ENCODE measurements at regions of chr12 and their contacts with region 1.

Region 1: DNA sequence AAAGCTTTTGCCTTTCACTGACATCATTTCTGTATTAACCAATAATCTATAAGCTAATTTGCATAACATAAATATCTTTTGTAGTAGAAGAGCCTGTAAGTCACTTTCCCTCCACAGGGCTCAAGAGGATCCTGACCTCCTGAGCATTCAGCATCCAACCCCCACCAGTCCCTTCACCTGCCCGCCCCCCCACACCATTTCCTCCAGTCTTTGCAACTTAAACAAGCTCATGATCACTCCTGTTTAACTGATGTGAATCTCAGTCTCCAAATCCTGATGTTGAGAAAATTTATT is 12.0 kb upstream of the CRY1 start:
- DNase-seq: no peak
- H3K27ac ChIP-seq: no peak overlapping the region
- CTCF ChIP-seq: no peak

Region 2: GRCh38 chr12:106986625-106987430 is 118.5 kb before region 1 on chr12 and contains the start of gene MTERF2:
- CTCF ChIA-PET with region 1: no interaction called
- POLR2A ChIA-PET with region 1: no interaction called
- DNase-seq: peak; percentile 98
- H3K27ac ChIP-seq: peak within 1 kb of the TSS; percentile 81
- CTCF ChIP-seq: no peak

Region 3: DNA sequence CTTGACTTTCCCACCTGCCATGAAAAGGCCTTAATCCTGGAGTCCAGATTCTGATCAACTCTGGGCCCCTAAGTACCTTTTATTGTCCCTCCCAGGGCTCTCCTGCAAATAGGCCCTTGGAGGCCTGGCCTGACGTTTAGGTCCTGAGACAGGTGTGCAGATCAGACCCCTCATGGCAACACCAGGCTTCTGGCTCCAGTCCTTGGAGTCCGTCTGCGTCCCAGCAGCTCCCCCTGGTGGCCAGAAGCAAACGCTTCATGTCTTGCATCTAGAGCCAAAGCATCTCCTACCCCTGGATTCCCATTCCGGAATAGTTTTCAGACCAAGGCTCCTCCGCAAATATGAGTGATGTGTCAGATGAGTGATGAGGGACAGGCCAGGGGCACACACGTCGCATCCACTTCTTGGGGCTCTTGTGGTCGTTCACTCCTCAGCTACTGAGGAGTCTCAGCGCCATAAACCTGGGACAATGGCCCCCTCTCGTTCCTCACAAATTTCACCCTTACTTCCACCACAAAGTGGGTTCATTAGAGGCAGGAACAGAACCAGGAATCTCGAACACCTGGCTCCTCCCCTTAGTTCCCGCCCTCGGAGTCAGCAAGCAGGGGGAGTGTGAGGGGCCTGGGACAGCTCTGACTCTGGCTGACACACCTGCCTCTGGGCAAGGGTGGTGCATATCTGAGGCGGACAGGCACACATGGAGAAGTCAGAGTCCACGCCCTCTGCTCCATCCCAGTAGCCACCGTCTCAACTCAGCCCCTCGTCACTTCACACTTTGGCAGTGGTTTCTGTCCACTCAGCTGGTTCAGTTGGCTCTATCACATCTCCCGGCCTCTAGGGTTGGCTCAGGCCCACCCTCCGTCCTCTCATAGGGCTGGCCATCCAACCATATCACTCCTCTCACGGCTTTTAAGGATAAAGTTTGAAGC is 502.4 kb after region 1 on chr12:
- CTCF ChIA-PET with region 1: interaction called, 10 read pairs
- POLR2A ChIA-PET with region 1: no interaction called
- DNase-seq: peak; percentile 76
- H3K27ac ChIP-seq: no peak overlapping the region
- CTCF ChIP-seq: peak; percentile 90

Measured in RWPE1 (cell line).